CD14-positive monocyte (primary cell): ENCODE measurements at regions of chr1 and their contacts with region 1.

Region 1: DNA sequence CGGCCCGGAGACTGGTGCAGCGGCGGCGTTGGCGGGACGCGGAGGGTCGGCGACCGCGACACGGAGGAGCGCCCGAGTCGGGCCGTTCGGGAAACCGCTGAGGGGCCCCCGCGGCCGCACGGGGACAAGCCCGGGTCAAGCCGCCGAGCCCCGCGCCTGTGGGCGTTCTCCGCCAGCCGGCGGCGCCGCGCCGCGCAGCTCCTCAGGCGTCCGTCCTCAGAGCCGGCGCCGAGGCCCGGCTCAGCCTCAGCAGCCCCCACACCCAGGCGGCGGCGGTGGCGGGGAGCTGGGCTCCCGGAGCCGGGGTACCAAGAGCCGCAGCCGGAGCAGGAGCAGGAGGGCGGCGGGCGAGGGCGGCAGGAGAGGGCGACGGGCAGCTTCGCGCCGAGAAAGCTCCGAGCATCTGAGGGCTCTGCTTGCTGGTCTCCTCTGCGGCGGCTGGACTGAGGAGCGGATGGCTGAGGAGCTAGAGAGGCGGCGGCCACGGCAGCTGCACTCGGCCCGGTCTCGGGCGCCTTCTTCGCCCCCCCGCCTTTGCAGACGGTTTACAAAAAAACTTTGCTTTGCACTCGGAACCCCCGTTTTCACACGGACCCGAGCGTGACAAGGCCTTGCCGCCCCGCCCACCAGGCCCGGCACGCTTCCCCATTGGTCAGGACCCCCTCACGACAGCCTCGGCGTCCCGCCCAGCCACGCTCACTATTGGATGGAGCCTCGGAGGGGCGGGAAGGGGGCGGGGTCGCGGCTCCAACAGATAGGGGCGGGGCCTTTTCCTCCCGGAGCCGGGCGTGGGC is at the start of gene SLC30A1:
- DNase-seq: peak; percentile 95 to 97 (median 96)
- H3K4me3 ChIP-seq: peak within 1 kb of the TSS; percentile 84 to 100 (median 99)
- H3K4me3 Mint-ChIP-seq: peak within 1 kb of the TSS; percentile 97 to 98
- H3K27ac ChIP-seq: peak within 1 kb of the TSS; percentile 56 to 90
- H3K27ac Mint-ChIP-seq: peak within 1 kb of the TSS; percentile 87 to 96 (median 95)
- H3K4me1 ChIP-seq: peaks cover 54 to 76% of the 10 kb centered on the region in 2 donors
- H3K4me1 Mint-ChIP-seq: peaks cover 66% of the 10 kb centered on the region
- H3K27me3 ChIP-seq: no peaks in the 10 kb centered on the region
- H3K27me3 Mint-ChIP-seq: peaks cover 0 to 2% (median 0%) of the 10 kb centered on the region in 3 donors
- CTCF ChIP-seq: no peak
- polyA plus RNA-seq, gene SLC30A1: 11.9 to 15.4 (median 13.2) TPM

Region 2: DNA sequence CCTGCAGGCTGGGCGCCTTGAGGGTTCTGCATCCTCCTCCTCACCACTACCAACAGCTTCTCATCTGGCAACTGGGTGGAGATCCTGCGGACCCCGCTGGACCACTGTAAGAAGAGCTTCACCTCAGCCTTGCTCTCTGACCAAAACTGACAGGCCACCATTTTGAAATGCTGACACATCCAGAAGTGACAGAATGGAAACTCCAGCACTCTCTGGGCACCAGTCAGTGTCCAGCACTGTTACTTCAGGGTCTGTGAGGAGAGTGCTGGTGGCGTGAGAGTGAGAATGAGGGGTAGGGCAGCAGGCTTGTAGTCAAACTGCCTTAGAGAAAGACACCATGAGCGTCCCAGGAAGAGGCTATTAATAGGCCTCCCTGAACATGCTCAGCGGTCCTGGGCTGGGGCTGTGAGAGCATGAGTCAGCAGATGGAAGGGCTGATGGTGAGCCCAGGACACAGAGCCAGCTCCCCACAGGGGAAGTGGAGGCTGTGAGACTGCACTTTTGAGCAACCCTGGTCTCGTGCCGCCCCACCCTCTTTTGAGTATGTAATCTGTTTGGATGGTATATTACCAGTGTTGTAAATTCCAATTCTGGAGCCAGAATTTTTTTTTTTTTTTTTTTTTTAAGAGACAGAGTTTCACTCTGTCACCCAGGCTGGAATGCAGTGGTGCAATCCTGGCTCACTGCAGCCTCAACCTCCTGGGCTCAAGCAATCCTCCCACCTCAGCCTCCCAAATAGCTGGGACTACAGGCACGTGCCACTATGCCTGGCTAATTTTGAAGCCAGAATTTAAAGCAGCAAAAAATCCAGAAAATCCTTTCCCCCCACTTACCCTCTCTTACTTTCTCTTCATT is 34.5 kb after region 1 on chr1:
- intact Hi-C with region 1: loop called in 1 of 2 experiments (anchors 2 kb)
- DNase-seq: peak; percentile 93 to 99 (median 95)
- H3K4me3 ChIP-seq: peak overlapping the region in 1 of 3 experiments; percentile 17
- H3K4me3 Mint-ChIP-seq: peak overlapping the region; percentile 62 to 76
- H3K27ac ChIP-seq: peak overlapping the region; percentile 67 to 74
- H3K27ac Mint-ChIP-seq: peak overlapping the region; percentile 92 to 98 (median 96)
- H3K4me1 ChIP-seq: peaks cover 44 to 48% of the 10 kb centered on the region in 2 donors
- H3K4me1 Mint-ChIP-seq: peaks cover 52% of the 10 kb centered on the region
- H3K27me3 ChIP-seq: no peaks in the 10 kb centered on the region
- H3K27me3 Mint-ChIP-seq: no peaks in the 10 kb centered on the region
- CTCF ChIP-seq: no peak

Region 3: GRCh38 chr1:211625040-211625439 is 46.2 kb after region 1 on chr1:
- intact Hi-C with region 1: loop called (anchors 1 to 5 kb)
- DNase-seq: peak; percentile 69 to 80 (median 79)
- H3K4me3 ChIP-seq: no peak overlapping the region
- H3K4me3 Mint-ChIP-seq: no peak overlapping the region
- H3K27ac ChIP-seq: no peak overlapping the region
- H3K27ac Mint-ChIP-seq: peak overlapping the region in 1 of 7 donors; percentile 49
- H3K4me1 ChIP-seq: no peaks in the 10 kb centered on the region
- H3K4me1 Mint-ChIP-seq: peaks cover 3% of the 10 kb centered on the region
- H3K27me3 ChIP-seq: no peaks in the 10 kb centered on the region
- H3K27me3 Mint-ChIP-seq: peaks cover 2 to 12% (median 7%) of the 10 kb centered on the region in 3 donors
- CTCF ChIP-seq: peak; percentile 72

Region 4: GRCh38 chr1:211654838-211655787 is 76.3 kb after region 1 on chr1:
- intact Hi-C with region 1: loop called (anchors 2 kb)
- DNase-seq: peak; percentile 67 to 77 (median 74)
- H3K4me3 ChIP-seq: no peak overlapping the region
- H3K4me3 Mint-ChIP-seq: no peak overlapping the region
- H3K27ac ChIP-seq: no peak overlapping the region
- H3K27ac Mint-ChIP-seq: no peak overlapping the region
- H3K4me1 ChIP-seq: peaks cover 0 to 9% of the 10 kb centered on the region in 2 donors
- H3K4me1 Mint-ChIP-seq: peaks cover 16% of the 10 kb centered on the region
- H3K27me3 ChIP-seq: no peaks in the 10 kb centered on the region
- H3K27me3 Mint-ChIP-seq: peaks cover 0 to 5% (median 2%) of the 10 kb centered on the region in 3 donors
- CTCF ChIP-seq: peak; percentile 94

Region 5: GRCh38 chr1:211675230-211676105 is 96.6 kb after region 1 on chr1 and contains the start of gene NEK2:
- intact Hi-C with region 1: no loop called
- DNase-seq: peak; percentile 67 to 80 (median 75)
- H3K4me3 ChIP-seq: peak within 1 kb of the TSS; percentile 58 to 90 (median 72)
- H3K4me3 Mint-ChIP-seq: peak within 1 kb of the TSS; percentile 88 to 92
- H3K27ac ChIP-seq: peak within 1 kb of the TSS in 1 of 2 donors; percentile 56
- H3K27ac Mint-ChIP-seq: peak within 1 kb of the TSS; percentile 15 to 88 (median 81)
- H3K4me1 ChIP-seq: peaks cover 16 to 23% of the 10 kb centered on the region in 2 donors
- H3K4me1 Mint-ChIP-seq: peaks cover 24% of the 10 kb centered on the region
- H3K27me3 ChIP-seq: no peaks in the 10 kb centered on the region
- H3K27me3 Mint-ChIP-seq: peaks cover 0 to 2% (median 2%) of the 10 kb centered on the region in 3 donors
- CTCF ChIP-seq: no peak
- polyA plus RNA-seq, gene NEK2: not detected